GM12878 (cell line): ENCODE measurements at regions of chr18 and their contacts with region 1.

Region 1: DNA sequence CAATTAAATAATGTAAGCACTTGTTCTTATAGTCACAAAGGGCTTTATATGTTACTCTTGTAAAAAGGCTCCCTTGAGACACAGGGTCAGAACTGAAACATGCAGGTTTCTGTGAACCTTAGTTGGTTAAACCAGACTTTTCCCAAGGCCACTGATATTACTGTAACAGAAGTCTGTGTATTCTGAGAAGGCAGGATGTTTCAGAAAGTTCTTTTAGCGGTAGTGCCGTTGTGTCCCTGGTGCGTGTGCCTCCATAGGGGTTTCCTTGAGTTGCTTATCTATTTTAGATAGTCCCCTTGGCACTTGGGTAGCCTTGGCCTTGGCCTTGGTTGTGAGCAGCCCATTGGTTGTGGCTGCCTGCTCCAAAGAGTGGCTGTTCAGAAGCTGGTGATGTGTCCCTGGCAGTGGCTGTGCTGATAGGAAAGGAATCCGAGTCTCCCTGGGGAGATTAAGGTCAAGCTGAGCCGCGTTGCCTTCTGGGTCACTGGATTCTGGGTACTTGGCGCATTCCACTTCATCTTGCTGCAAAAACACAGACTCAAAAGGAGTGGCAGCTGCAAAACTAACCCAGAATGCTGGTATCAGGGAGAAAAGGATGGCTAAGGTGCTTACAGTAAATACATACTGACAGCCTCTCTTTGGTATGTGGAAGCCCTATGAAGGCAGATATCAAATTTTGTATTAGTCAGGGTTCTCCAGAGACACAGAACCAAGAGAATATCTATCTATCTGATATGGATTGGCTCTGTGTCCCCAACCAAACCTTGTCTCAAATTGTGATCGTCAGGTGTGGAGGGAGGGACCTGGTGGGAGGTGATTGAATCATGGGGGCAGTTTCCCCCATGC is 69.7 kb downstream of the FHOD3 start:
- DNase-seq: peak; percentile 82
- ATAC-seq: peak; percentile 80
- H3K4me3 ChIP-seq: no peak overlapping the region
- H3K27ac ChIP-seq: peak overlapping the region; percentile 72
- H3K4me1 ChIP-seq: peaks cover 14% of the 10 kb centered on the region
- H3K27me3 ChIP-seq: no peaks in the 10 kb centered on the region
- CTCF ChIP-seq: no peak
- EP300 ChIP-seq: peak in 1 of 2 experiments; percentile 30; a peak in 1 of 4 replicates
- POLR2A ChIP-seq: no peak
- RAD21 ChIP-seq: no peak

Region 2: GRCh38 chr18:36107477-36107876 is 259.7 kb before region 1 on chr18:
- CTCF ChIA-PET with region 1: no interaction called
- POLR2A ChIA-PET with region 1: no interaction called
- RAD21 ChIA-PET with region 1: no interaction called
- SMC1A ChIA-PET with region 1: no interaction called
- in situ Hi-C with region 1: no loop called
- intact Hi-C with region 1: no loop called
- DNase-seq: no peak
- ATAC-seq: no peak
- H3K4me3 ChIP-seq: no peak overlapping the region
- H3K27ac ChIP-seq: no peak overlapping the region
- H3K4me1 ChIP-seq: no peaks in the 10 kb centered on the region
- H3K27me3 ChIP-seq: no peaks in the 10 kb centered on the region
- CTCF ChIP-seq: no peak
- EP300 ChIP-seq: no peak
- POLR2A ChIP-seq: no peak
- RAD21 ChIP-seq: no peak

Region 3: DNA sequence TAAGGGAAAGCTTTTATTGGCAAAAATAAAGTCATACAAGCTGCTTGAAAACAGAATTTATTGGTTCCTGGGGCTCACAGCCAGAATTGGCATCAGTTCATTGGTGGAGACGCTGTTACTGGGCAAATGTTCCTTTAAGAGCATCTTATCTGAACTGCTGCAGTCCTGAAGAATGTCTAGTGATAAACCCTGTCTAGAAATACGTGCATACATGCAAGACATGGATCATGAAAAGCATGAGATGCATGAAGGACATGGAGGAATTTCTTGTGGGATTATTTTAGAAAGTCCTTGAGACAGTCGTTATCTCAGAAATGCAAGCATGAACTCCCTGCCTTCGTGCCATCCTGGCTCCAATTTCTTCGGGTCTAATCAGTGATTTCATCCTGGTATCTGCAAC is 102.2 kb before region 1 on chr18:
- CTCF ChIA-PET with region 1: no interaction called
- POLR2A ChIA-PET with region 1: no interaction called
- RAD21 ChIA-PET with region 1: no interaction called
- SMC1A ChIA-PET with region 1: no interaction called
- in situ Hi-C with region 1: no loop called
- intact Hi-C with region 1: no loop called
- DNase-seq: no peak
- ATAC-seq: peak; percentile 47
- H3K4me3 ChIP-seq: no peak overlapping the region
- H3K27ac ChIP-seq: no peak overlapping the region
- H3K4me1 ChIP-seq: no peaks in the 10 kb centered on the region
- H3K27me3 ChIP-seq: no peaks in the 10 kb centered on the region
- CTCF ChIP-seq: no peak
- EP300 ChIP-seq: no peak
- POLR2A ChIP-seq: no peak
- RAD21 ChIP-seq: no peak

Region 4: GRCh38 chr18:36296650-36297416 is 70.4 kb before region 1 on chr18:
- CTCF ChIA-PET with region 1: interaction called, 21 read pairs
- POLR2A ChIA-PET with region 1: interaction called, 51 read pairs
- RAD21 ChIA-PET with region 1: interaction called, 203 read pairs
- SMC1A ChIA-PET with region 1: interaction called, 212 read pairs
- in situ Hi-C with region 1: no loop called
- intact Hi-C with region 1: loop called (anchors 2 kb)
- DNase-seq: no peak
- ATAC-seq: peak; percentile 49
- H3K4me3 ChIP-seq: peak overlapping the region; percentile 69
- H3K27ac ChIP-seq: no peak overlapping the region
- H3K4me1 ChIP-seq: no peaks in the 10 kb centered on the region
- H3K27me3 ChIP-seq: peaks cover 0 to 4% of the 10 kb centered on the region in 2 experiments; a peak in 1 of 4 replicates
- CTCF ChIP-seq: peak; percentile 17 to 56 (median 34); a peak in 4 of 6 replicates
- EP300 ChIP-seq: no peak
- POLR2A ChIP-seq: no peak
- RAD21 ChIP-seq: peak; percentile 40; the same call in 1 of the 2 replicates

Region 5: GRCh38 chr18:36333414-36333813 is 33.8 kb before region 1 on chr18:
- CTCF ChIA-PET with region 1: interaction called, 4 read pairs
- POLR2A ChIA-PET with region 1: interaction called, 7 read pairs
- RAD21 ChIA-PET with region 1: interaction called, 41 read pairs
- SMC1A ChIA-PET with region 1: interaction called, 67 read pairs
- in situ Hi-C with region 1: no loop called
- intact Hi-C with region 1: loop called (anchors 2 kb)
- DNase-seq: no peak
- ATAC-seq: peak; percentile 26
- H3K4me3 ChIP-seq: no peak overlapping the region
- H3K27ac ChIP-seq: no peak overlapping the region
- H3K4me1 ChIP-seq: peaks cover 10% of the 10 kb centered on the region
- H3K27me3 ChIP-seq: no peaks in the 10 kb centered on the region
- CTCF ChIP-seq: no peak
- EP300 ChIP-seq: no peak
- POLR2A ChIP-seq: no peak
- RAD21 ChIP-seq: no peak

Region 6: GRCh38 chr18:36378205-36378604 is 11.0 kb after region 1 on chr18:
- CTCF ChIA-PET with region 1: interaction called, 7 read pairs
- POLR2A ChIA-PET with region 1: interaction called, 13 read pairs
- RAD21 ChIA-PET with region 1: interaction called, 21 read pairs
- SMC1A ChIA-PET with region 1: interaction called, 1,180 read pairs
- in situ Hi-C with region 1: no loop called
- intact Hi-C with region 1: no loop called
- DNase-seq: no peak
- ATAC-seq: no peak
- H3K4me3 ChIP-seq: no peak overlapping the region
- H3K27ac ChIP-seq: no peak overlapping the region
- H3K4me1 ChIP-seq: no peaks in the 10 kb centered on the region; the same call in 1 of the 2 replicates
- H3K27me3 ChIP-seq: no peaks in the 10 kb centered on the region
- CTCF ChIP-seq: no peak
- EP300 ChIP-seq: no peak
- POLR2A ChIP-seq: no peak
- RAD21 ChIP-seq: no peak

Region 7: DNA sequence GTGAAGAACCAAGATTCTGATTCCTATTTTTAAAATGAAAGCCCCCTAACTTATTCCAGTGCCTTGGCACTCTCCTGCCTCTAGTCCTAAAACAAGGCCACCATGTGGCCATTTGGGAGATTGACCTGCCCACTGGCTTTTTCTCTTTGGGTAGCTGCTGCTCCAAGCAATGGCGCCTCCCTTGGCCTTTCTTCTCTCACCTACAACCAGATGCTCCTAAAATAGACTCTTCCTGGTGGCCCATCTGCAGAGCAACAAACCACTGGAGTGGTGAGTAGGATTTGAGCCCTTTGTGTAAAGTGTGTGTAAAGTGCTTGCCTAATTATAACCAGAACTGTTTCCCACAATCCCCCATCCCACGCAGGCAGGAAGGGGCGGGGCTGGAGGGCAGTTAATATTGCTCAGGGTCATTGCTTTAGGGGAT is 44.5 kb after region 1 on chr18:
- CTCF ChIA-PET with region 1: interaction called, 17 read pairs
- POLR2A ChIA-PET with region 1: interaction called, 6 read pairs
- RAD21 ChIA-PET with region 1: interaction called, 20 read pairs
- SMC1A ChIA-PET with region 1: interaction called, 1,180 read pairs
- in situ Hi-C with region 1: no loop called
- intact Hi-C with region 1: no loop called
- DNase-seq: no peak
- ATAC-seq: peak; percentile 79
- H3K4me3 ChIP-seq: no peak overlapping the region
- H3K27ac ChIP-seq: no peak overlapping the region
- H3K4me1 ChIP-seq: no peaks in the 10 kb centered on the region
- H3K27me3 ChIP-seq: no peaks in the 10 kb centered on the region
- CTCF ChIP-seq: peak; percentile 25 to 33 (median 31); a peak in 3 of 6 replicates
- EP300 ChIP-seq: no peak
- POLR2A ChIP-seq: no peak
- RAD21 ChIP-seq: peak; percentile 28; the same call in 1 of the 2 replicates

Region 8: GRCh38 chr18:36493349-36494159 is 126.3 kb after region 1 on chr18:
- CTCF ChIA-PET with region 1: interaction called, 5 read pairs
- POLR2A ChIA-PET with region 1: interaction called, 3 read pairs
- RAD21 ChIA-PET with region 1: interaction called, 16 read pairs
- SMC1A ChIA-PET with region 1: interaction called, 23 read pairs
- in situ Hi-C with region 1: no loop called
- intact Hi-C with region 1: loop called (anchors 1 kb)
- DNase-seq: no peak
- ATAC-seq: peak; percentile 81
- H3K4me3 ChIP-seq: no peak overlapping the region
- H3K27ac ChIP-seq: no peak overlapping the region
- H3K4me1 ChIP-seq: peaks cover 7% of the 10 kb centered on the region
- H3K27me3 ChIP-seq: no peaks in the 10 kb centered on the region
- CTCF ChIP-seq: no peak
- EP300 ChIP-seq: no peak; a peak in 1 of 4 replicates
- POLR2A ChIP-seq: no peak
- RAD21 ChIP-seq: no peak